MCF 10A (cell line): ENCODE measurements at regions of chr10 and their contacts with region 1.

Region 1: DNA sequence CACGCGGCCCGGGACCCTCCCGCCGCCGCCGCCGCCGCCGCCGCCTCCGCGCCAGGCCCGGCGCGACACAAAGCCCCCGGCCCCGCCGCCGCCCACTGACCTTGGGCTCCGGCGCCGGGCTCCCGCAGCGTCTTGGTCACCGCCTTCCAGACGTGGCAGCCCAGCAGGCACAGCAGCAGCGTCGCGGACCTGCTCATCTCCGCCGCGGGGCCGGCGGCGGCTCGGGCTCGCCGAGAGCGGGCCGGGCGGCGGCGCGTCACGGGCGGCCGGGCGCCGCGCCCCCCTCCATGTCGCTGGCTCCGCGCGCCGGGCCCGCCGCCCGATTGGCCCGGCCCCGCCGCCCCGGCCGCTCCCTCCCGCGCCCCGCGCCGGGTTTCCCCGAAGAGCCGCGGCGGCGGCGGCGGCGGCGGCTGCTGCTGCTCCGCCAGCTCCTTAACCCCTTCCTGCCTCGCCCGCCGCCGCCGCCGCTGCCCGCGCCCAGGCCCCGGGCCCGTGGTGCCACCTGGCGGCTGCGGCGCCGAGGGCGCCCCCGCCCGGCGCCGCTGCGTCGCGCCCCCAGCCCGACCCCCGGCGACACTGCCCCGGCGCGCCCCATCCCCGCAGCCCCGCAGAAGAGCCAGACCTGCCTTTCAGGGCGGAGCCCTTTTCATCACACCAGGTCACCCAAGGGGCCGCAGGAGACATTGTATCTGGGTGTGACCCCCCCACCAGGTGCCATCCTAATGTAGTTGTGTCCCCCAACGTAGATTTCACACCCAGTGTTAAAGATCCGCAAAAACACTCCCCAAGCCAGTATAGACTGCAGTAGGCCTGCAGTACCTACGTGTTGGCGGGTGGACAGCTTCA is at the start of gene FAM171A1:
- DNase-seq: peak; percentile 60
- H3K4me3 Mint-ChIP-seq: peak within 1 kb of the TSS; percentile 74
- H3K27ac Mint-ChIP-seq: peak within 1 kb of the TSS; percentile 49
- H3K4me1 Mint-ChIP-seq: no peaks in the 10 kb centered on the region
- H3K27me3 Mint-ChIP-seq: no peaks in the 10 kb centered on the region
- CTCF ChIP-seq: peak; percentile 27
- total RNA-seq, gene FAM171A1: 9.3 and 15.9 TPM in 2 replicates

Region 2: DNA sequence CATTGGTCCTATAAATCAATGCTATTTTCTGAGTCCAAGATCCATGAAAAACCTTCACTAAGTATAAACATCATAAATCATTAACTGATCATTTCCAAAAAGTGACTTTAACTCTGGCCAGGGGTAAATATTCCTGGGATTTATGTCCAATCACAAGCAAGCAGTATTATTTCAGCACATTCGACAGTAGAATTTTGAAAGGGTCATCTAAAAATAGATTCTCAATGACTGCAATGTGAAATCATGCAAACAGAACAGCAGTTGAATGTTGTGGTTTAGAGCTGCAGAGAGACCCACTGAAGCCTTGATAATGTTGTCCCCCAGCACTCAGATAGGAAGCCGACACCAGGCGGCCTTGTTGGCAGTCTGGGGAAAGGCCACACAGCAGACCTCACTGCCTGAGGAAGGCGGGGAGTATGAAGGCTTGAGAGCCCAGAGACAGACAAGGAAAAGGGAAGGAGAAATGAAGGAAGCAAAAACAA is 634.4 kb before region 1 on chr10:
- CTCF ChIA-PET with region 1: no interaction called
- POLR2A ChIA-PET with region 1: no interaction called
- intact Hi-C with region 1: no loop called
- DNase-seq: no peak
- H3K4me3 Mint-ChIP-seq: no peak overlapping the region
- H3K27ac Mint-ChIP-seq: no peak overlapping the region
- H3K4me1 Mint-ChIP-seq: no peaks in the 10 kb centered on the region
- H3K27me3 Mint-ChIP-seq: no peaks in the 10 kb centered on the region
- CTCF ChIP-seq: no peak

Region 3: GRCh38 chr10:14837757-14838581 is 533.1 kb before region 1 on chr10 and contains the starts of genes CDNF, HSPA14 and MSANTD7:
- CTCF ChIA-PET with region 1: no interaction called
- POLR2A ChIA-PET with region 1: no interaction called
- intact Hi-C with region 1: loop called (anchors 10 kb)
- DNase-seq: peak; percentile 99
- H3K4me3 Mint-ChIP-seq: peak within 1 kb of the TSS; percentile 76
- H3K27ac Mint-ChIP-seq: peak within 1 kb of the TSS; percentile 91
- H3K4me1 Mint-ChIP-seq: no peaks in the 10 kb centered on the region
- H3K27me3 Mint-ChIP-seq: no peaks in the 10 kb centered on the region
- CTCF ChIP-seq: no peak
- total RNA-seq, gene CDNF: 1.9 and 2.9 TPM in 2 replicates
- total RNA-seq, gene HSPA14: 12.1 and 14.0 TPM in 2 replicates
- total RNA-seq, gene MSANTD7: 17.2 and 18.1 TPM in 2 replicates

Region 4: GRCh38 chr10:15106352-15107013 is 264.6 kb before region 1 on chr10:
- CTCF ChIA-PET with region 1: no interaction called
- POLR2A ChIA-PET with region 1: no interaction called
- intact Hi-C with region 1: loop called (anchors 5 kb)
- DNase-seq: peak; percentile 79
- H3K4me3 Mint-ChIP-seq: no peak overlapping the region
- H3K27ac Mint-ChIP-seq: no peak overlapping the region
- H3K4me1 Mint-ChIP-seq: no peaks in the 10 kb centered on the region
- H3K27me3 Mint-ChIP-seq: no peaks in the 10 kb centered on the region
- CTCF ChIP-seq: peak; percentile 83

Region 5: GRCh38 chr10:15131330-15131729 is 239.7 kb before region 1 on chr10:
- CTCF ChIA-PET with region 1: no interaction called
- POLR2A ChIA-PET with region 1: no interaction called
- intact Hi-C with region 1: no loop called
- DNase-seq: no peak
- H3K4me3 Mint-ChIP-seq: no peak overlapping the region
- H3K27ac Mint-ChIP-seq: no peak overlapping the region
- H3K4me1 Mint-ChIP-seq: no peaks in the 10 kb centered on the region
- H3K27me3 Mint-ChIP-seq: no peaks in the 10 kb centered on the region
- CTCF ChIP-seq: no peak

Region 6: GRCh38 chr10:15209827-15210509 is 161.1 kb before region 1 on chr10:
- CTCF ChIA-PET with region 1: interaction called, 3 read pairs
- POLR2A ChIA-PET with region 1: no interaction called
- intact Hi-C with region 1: loop called (anchors 1 kb)
- DNase-seq: peak; percentile 78
- H3K4me3 Mint-ChIP-seq: no peak overlapping the region
- H3K27ac Mint-ChIP-seq: no peak overlapping the region
- H3K4me1 Mint-ChIP-seq: peaks cover 5% of the 10 kb centered on the region
- H3K27me3 Mint-ChIP-seq: no peaks in the 10 kb centered on the region
- CTCF ChIP-seq: peak; percentile 66

Region 7: GRCh38 chr10:15348579-15348978 is 22.5 kb before region 1 on chr10:
- CTCF ChIA-PET with region 1: no interaction called
- POLR2A ChIA-PET with region 1: no interaction called
- intact Hi-C with region 1: no loop called
- DNase-seq: no peak
- H3K4me3 Mint-ChIP-seq: no peak overlapping the region
- H3K27ac Mint-ChIP-seq: no peak overlapping the region
- H3K4me1 Mint-ChIP-seq: peaks cover 8% of the 10 kb centered on the region
- H3K27me3 Mint-ChIP-seq: no peaks in the 10 kb centered on the region
- CTCF ChIP-seq: no peak